ENCODE measurements at regions of chr11 and their contacts with region 1.

Region 1: DNA sequence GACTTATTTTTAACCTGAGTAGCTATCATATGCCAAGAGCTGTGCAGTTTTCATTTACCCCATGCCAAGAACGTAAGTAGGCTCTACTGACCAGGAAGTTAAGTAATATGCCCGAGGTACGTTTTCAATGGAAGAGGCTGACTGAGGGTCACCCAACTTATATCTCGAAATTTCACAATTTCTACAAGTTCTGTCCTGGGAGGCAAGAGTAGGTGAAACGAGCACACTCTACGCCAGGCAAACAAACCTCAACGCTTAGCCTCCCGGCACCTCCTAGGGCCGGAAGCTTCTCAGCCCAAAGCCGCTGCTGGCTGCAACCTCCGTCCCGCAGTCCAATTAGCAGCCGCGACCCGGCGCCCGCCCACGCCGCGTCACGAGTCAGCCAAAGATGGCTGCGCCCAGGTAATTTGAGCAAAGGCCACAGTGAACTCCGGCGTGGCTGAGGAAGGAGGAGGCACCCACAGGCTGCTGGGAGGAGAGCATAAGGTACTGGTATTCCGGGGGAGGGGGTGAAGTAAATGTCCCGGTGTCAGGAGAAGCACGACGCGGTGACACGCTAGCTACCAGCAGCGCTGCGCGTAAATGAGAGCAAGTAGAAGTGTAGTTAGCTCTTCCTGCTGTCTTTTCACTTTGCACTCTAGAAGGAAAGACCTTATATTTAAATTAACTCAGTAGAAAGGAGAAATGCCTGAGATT is at the start of gene TMEM126A:
- DNase-seq: peak; percentile 85

Region 2: DNA sequence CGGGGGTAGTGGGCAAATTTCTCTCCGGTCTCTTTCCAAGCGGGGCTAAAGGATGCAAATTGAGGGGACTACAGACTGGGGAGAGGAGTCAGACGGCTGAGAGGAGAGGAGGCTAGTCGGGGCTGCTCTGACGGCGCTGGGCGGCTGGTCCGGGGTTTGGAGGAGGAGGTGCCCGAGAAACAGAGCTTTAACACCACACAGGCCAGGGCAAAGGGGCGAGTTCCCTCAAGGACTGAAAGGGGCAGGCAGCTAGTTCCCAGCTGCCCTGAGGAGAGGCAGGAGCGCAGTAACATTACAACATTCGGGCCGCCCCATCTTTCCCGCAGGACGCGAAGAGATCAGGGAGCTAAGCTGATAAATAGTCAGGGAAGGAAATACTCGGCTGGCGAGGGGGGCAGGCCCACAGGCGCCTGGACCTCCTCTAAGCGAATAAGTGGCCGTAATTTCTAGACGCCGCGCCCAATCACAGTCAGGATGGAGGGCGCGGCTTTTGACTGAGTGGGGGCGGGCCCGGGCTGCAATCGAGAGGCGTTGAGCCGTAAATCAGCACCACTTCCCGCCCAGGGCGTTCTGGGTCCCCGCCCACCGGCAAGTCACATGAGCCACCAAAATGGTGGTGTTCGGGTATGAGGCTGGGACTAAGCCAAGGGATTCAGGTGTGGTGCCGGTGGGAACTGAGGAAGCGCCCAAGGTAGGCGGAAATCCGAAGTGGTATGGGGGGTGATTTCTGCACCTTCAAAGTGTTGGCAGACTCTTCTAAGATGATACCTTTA is 19.6 kb before region 1 on chr11 and contains the start of gene TMEM126B:
- CTCF ChIA-PET with region 1: interaction called, 3 read pairs
- POLR2A ChIA-PET with region 1: interaction called, 41 read pairs
- DNase-seq: peak; percentile 89

Region 3: GRCh38 chr11:85634747-85635146 is 13.0 kb before region 1 on chr11:
- CTCF ChIA-PET with region 1: no interaction called
- POLR2A ChIA-PET with region 1: interaction called, 20 read pairs
- DNase-seq: no peak

Region 4: GRCh38 chr11:85664615-85665481 is 17.1 kb after region 1 on chr11 and contains the start of gene CREBZF:
- CTCF ChIA-PET with region 1: interaction called, 3 read pairs
- POLR2A ChIA-PET with region 1: interaction called, 16 read pairs
- DNase-seq: peak; percentile 91

Measured in HEK293T (cell line).